ENCODE measurements at regions of chr11 and their contacts with region 1.

Region 1: DNA sequence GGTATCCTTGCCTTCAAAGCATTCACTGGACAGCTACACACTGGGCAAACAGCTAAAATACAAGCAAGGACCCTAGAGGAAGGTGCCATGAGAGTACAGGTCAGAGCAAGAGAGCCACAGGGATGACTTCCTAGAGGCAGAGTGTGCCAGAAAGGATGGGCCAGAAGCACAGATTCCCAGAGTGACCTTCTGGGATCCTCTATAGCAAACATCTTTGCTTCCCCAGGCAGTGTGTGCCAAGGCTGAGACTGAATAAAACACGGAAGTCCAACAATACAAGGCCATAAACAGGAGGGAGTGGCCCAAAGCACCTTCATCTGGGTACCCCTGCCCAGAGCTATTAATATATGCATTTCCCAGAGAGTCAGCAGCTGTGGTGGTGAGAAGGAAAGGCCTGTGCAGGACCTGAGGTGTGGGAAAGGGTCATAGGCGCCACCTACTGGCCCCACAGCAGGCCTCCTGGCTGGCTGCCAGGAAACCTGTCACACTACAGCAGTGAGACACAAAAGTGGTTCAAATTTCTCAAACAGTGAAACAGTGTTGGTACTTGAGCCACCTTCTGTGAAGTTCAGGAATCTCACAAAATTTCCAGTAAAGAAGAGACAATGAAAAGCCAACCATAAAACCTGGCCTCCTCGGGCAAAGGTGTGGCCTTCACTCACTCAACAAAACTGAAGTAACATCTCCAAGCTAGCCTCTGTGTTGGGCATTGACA is 20.3 kb downstream of the CLPB start:
- DNase-seq: peak; percentile 83 to 90 (median 86)
- ATAC-seq: peak; percentile 88
- H3K4me3 ChIP-seq: no peak overlapping the region
- H3K27ac ChIP-seq: no peak overlapping the region; the same call in 2 of the 3 replicates
- H3K4me1 ChIP-seq: peaks cover 8 to 25% of the 10 kb centered on the region in 2 experiments
- H3K27me3 ChIP-seq: no peaks in the 10 kb centered on the region
- CTCF ChIP-seq: peak; percentile 85 to 94 (median 92)
- EP300 ChIP-seq: no peak
- POLR2A ChIP-seq: no peak
- RAD21 ChIP-seq: peak; percentile 82 to 95

Region 2: DNA sequence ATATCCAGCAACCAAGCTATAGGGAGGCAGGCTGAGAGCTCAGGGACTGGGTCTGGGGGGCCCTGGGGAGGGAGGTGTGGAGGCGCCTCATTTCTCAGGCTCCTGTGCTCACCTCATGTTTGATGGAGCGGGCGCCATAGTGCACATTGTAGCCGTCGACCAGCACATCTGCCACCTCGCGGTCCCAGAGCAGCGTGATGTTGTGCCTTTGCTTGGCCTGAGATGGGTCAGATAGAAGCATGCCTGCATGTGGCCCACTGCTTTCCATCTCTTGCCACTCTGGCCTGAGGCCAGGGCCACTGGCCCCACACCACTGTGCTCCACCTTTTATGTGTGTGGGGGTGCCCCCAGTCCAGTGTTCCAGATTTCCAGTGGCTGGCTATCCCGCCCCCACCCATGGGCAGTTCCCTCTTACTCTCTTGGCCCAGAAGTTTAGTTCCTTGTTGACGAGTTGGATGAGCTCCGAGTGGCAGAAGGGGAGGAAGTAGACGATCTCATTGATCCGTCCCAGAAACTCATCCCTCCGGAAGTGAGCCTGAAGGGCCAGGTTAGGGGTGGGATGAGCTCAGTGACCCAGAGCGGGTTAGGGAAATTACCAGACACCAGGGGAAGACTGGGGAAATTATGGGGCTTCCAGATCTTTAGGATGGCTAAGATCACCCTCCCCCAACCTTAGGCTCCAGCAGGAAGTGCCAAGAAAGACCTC is 120.0 kb before region 1 on chr11:
- CTCF ChIA-PET with region 1: interaction called, 8 read pairs
- POLR2A ChIA-PET with region 1: no interaction called
- in situ Hi-C with region 1: no loop called
- intact Hi-C with region 1: loop called (anchors 2 kb)
- DNase-seq: no peak
- ATAC-seq: no peak
- H3K4me3 ChIP-seq: no peak overlapping the region
- H3K27ac ChIP-seq: no peak overlapping the region
- H3K4me1 ChIP-seq: 0 out of 5 replicates have a peak, but pooled peaks cover 0 to 3% of the 10 kb centered on the region in 2 experiments
- H3K27me3 ChIP-seq: no peaks in the 10 kb centered on the region
- CTCF ChIP-seq: no peak
- EP300 ChIP-seq: no peak
- POLR2A ChIP-seq: no peak
- RAD21 ChIP-seq: no peak

Region 3: DNA sequence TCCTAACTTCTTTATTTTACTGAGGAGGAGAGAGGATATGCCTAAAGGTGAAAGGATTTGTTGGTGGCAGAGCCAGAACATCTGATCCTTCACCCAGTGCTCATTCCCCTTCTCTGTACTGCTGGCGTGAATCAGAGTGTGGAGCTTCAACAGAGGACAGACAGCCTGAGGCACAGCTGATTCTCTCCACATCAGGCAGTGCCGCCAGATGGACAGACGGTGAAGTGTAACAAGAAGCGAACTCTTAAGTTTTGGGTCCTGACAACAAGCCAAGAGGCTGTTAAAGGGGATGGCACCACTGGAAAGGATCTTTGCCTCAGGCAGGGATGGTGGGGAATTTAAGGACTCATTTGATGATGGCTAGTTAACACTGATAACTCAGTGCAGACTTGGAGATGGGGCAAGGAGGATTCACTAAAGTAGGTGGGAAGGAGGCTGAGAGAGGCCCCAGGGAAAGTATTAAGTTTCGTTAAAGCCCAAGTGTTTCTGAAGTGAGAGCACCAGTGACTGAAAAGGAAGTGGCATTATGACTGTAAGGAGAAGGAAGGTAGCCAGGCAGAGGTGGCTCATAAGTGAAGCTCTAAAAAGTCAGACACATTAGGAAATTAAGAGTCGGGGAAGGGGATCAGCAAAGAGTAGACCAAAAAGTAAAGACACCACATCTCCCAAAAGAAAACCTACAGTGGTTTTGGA is 61.1 kb before region 1 on chr11:
- CTCF ChIA-PET with region 1: interaction called, 4 read pairs
- POLR2A ChIA-PET with region 1: no interaction called
- in situ Hi-C with region 1: no loop called
- intact Hi-C with region 1: loop called (anchors 1 kb)
- DNase-seq: peak in 3 of 4 experiments; percentile 8 to 44 (median 26)
- ATAC-seq: peak; percentile 58
- H3K4me3 ChIP-seq: no peak overlapping the region
- H3K27ac ChIP-seq: no peak overlapping the region
- H3K4me1 ChIP-seq: peaks cover 0 to 10% of the 10 kb centered on the region in 2 experiments; a peak in 3 of 5 replicates
- H3K27me3 ChIP-seq: no peaks in the 10 kb centered on the region
- CTCF ChIP-seq: peak; percentile 35 to 55 (median 44); a peak in 5 of 6 replicates
- EP300 ChIP-seq: no peak
- POLR2A ChIP-seq: no peak
- RAD21 ChIP-seq: peak in 1 of 2 experiments; percentile 70; a peak in 3 of 4 replicates

Region 4: GRCh38 chr11:72821883-72822799 is 408.1 kb after region 1 on chr11:
- CTCF ChIA-PET with region 1: no interaction called
- POLR2A ChIA-PET with region 1: no interaction called
- in situ Hi-C with region 1: no loop called
- intact Hi-C with region 1: no loop called
- DNase-seq: peak; percentile 90 to 95 (median 94)
- ATAC-seq: peak; percentile 96
- H3K4me3 ChIP-seq: peak overlapping the region; percentile 42
- H3K27ac ChIP-seq: peak overlapping the region; percentile 60; the same call in 1 of the 3 replicates
- H3K4me1 ChIP-seq: peaks cover 0 to 31% of the 10 kb centered on the region in 2 experiments; a peak in 2 of 5 replicates
- H3K27me3 ChIP-seq: no peaks in the 10 kb centered on the region
- CTCF ChIP-seq: peak; percentile 13 to 40 (median 18); a peak in 2 of 6 replicates
- EP300 ChIP-seq: no peak
- POLR2A ChIP-seq: peak; percentile 70
- RAD21 ChIP-seq: 0 out of 4 replicates have a peak, but pooled peaks of 1 of the 2 experiments have one; percentile 24